H1 (cell line): ENCODE measurements at regions of chr9 and their contacts with region 1.

Region 1: GRCh38 chr9:22228542-22228941 is 218.1 kb upstream of the DMRTA1 start:
- DNase-seq: no peak
- H3K4me3 ChIP-seq: no peak overlapping the region
- H3K27ac ChIP-seq: no peak overlapping the region
- H3K4me1 ChIP-seq: no peaks in the 10 kb centered on the region
- H3K27me3 ChIP-seq: no peaks in the 10 kb centered on the region
- CTCF ChIP-seq: no peak; a peak in 1 of 4 replicates
- EP300 ChIP-seq: no peak
- POLR2A ChIP-seq: no peak
- RAD21 ChIP-seq: no peak

Region 2: DNA sequence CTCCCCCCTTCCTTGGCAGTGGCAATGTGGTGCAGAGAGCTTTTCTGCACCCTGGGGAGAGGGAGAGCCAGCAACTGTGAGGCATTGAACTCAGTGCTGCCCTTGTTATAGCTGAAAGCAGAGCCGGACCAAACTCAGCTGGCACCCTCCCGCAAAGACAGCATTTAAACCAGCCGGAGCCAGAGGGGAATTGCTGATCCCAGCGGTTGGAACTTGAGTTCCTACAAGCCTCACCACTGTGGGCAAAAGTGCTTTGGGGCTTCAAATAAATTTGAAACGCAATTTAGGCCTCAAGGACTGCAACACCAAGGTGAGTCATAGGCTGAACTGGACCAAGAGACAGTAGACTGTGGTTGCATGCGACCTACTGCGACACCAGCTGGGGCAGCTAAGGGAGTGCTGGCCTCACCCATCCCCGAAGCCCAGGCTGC is 11.8 kb before region 1 on chr9:
- CTCF ChIA-PET with region 1: interaction called, 10 read pairs
- POLR2A ChIA-PET with region 1: no interaction called
- DNase-seq: no peak
- H3K4me3 ChIP-seq: no peak overlapping the region
- H3K27ac ChIP-seq: no peak overlapping the region
- H3K4me1 ChIP-seq: no peaks in the 10 kb centered on the region
- H3K27me3 ChIP-seq: no peaks in the 10 kb centered on the region
- CTCF ChIP-seq: no peak
- EP300 ChIP-seq: no peak
- POLR2A ChIP-seq: no peak
- RAD21 ChIP-seq: no peak

Region 3: GRCh38 chr9:22238809-22239684 is 10.5 kb after region 1 on chr9:
- CTCF ChIA-PET with region 1: interaction called, 21 read pairs
- POLR2A ChIA-PET with region 1: interaction called, 3 read pairs
- DNase-seq: no peak
- H3K4me3 ChIP-seq: no peak overlapping the region
- H3K27ac ChIP-seq: no peak overlapping the region
- H3K4me1 ChIP-seq: no peaks in the 10 kb centered on the region
- H3K27me3 ChIP-seq: no peaks in the 10 kb centered on the region
- CTCF ChIP-seq: no peak
- EP300 ChIP-seq: no peak
- POLR2A ChIP-seq: no peak
- RAD21 ChIP-seq: peak; percentile 15 to 27; a peak in 3 of 4 replicates